ENCODE measurements at regions of chr1 and their contacts with region 1.

Region 1: GRCh38 chr1:178870944-178871343 is at the start of gene ANGPTL1:
- DNase-seq: peak; percentile 71
- H3K4me3 ChIP-seq: no peak within 1 kb of the TSS
- H3K27ac ChIP-seq: no peak within 1 kb of the TSS
- H3K4me1 ChIP-seq: peaks cover 37% of the 10 kb centered on the region
- H3K27me3 ChIP-seq: no peaks in the 10 kb centered on the region
- CTCF ChIP-seq: no peak
- POLR2A ChIP-seq: no peak
- total RNA-seq, gene ANGPTL1: 0.51 TPM in 1 of 2 replicates, not detected in the other

Region 2: DNA sequence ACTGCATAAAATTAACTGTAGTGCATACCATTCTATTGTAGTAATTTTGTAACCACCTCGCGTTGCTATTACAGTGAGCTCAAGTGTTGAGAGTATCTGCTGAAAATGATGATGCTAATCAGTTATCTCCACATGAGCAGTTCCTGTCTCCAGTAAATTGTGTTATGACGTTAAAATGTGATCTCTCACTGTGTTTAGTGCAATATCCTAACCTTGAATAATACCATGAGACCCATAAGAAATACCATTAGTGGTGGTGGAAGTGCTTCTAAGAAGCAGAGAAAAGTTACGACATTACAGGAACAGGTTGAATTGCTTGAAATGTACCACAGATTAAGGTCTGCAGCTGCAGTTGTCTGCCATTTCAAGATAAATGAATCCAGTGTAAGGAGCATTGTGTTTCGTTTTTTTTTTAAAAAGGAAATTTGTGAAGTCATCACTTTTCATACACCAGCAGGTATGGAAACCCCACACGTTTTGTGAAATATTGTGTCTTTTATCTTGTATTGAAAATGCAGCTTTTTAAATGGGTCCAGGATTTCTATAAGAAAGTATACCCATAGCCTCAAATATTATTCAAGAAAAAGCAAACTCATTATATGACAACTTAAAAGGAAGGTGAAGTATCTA is 72.6 kb before region 1 on chr1:
- CTCF ChIA-PET with region 1: no interaction called
- POLR2A ChIA-PET with region 1: no interaction called
- dilution Hi-C with region 1: no loop called
- intact Hi-C with region 1: no loop called
- DNase-seq: no peak
- H3K4me3 ChIP-seq: no peak overlapping the region
- H3K27ac ChIP-seq: no peak overlapping the region
- H3K4me1 ChIP-seq: no peaks in the 10 kb centered on the region
- H3K27me3 ChIP-seq: no peaks in the 10 kb centered on the region
- CTCF ChIP-seq: no peak
- POLR2A ChIP-seq: no peak

Region 3: DNA sequence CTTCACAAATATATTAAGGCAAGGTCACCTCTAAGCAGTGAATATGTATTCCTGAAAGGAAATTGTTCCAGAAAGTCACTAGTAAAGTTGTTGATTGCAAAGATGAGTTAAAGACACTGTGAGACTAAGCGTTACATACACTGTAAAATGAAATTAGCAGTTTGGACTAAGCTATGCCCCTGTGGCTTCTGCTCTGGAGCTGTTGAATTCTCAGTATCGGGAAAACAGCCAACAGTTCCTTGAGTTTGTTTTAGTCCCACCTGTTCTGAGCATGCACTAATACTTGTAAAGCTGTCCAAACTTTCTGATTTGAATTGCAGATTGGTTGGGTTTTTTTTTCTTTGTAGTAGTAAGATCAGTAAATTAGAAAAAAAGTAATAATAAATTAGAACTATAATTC is 21.0 kb before region 1 on chr1:
- CTCF ChIA-PET with region 1: interaction called, 4 read pairs
- POLR2A ChIA-PET with region 1: no interaction called
- dilution Hi-C with region 1: no loop called
- intact Hi-C with region 1: loop called (anchors 2 kb)
- DNase-seq: no peak
- H3K4me3 ChIP-seq: no peak overlapping the region
- H3K27ac ChIP-seq: no peak overlapping the region
- H3K4me1 ChIP-seq: peaks cover 2% of the 10 kb centered on the region
- H3K27me3 ChIP-seq: no peaks in the 10 kb centered on the region
- CTCF ChIP-seq: no peak
- POLR2A ChIP-seq: no peak

Region 4: DNA sequence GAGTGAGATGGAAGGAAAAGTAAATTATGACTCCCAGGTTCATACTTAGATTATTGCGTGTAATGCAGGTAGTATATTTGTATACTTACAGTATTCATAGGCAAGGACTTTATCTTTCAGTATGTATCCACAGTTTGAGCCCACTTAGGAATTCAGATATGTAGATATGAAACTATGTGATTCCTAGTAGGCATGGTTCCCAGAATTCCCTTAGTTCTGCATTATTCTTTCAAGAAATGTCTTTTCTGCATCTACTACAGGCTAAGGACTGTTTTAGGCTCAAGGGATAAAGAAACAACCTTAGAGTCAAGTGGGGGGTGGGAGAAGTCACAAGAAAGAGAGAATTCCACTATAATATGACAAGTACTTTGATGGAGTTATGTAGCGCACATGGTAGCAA is 13.8 kb before region 1 on chr1:
- CTCF ChIA-PET with region 1: interaction called, 17 read pairs
- POLR2A ChIA-PET with region 1: interaction called, 3 read pairs
- dilution Hi-C with region 1: no loop called
- intact Hi-C with region 1: no loop called
- DNase-seq: no peak
- H3K4me3 ChIP-seq: no peak overlapping the region
- H3K27ac ChIP-seq: no peak overlapping the region
- H3K4me1 ChIP-seq: no peaks in the 10 kb centered on the region
- H3K27me3 ChIP-seq: no peaks in the 10 kb centered on the region
- CTCF ChIP-seq: no peak
- POLR2A ChIP-seq: no peak